MCF 10A (cell line): ENCODE measurements at regions of chr4 and their contacts with region 1.

Region 1: GRCh38 chr4:152640058-152640833 is 39.6 kb downstream of the TMEM154 start:
- DNase-seq: peak; percentile 38
- H3K4me3 Mint-ChIP-seq: no peak overlapping the region
- H3K27ac Mint-ChIP-seq: no peak overlapping the region
- H3K4me1 Mint-ChIP-seq: no peaks in the 10 kb centered on the region
- H3K27me3 Mint-ChIP-seq: no peaks in the 10 kb centered on the region
- CTCF ChIP-seq: peak; percentile 39

Region 2: GRCh38 chr4:152408514-152409327 is 231.5 kb before region 1 on chr4:
- CTCF ChIA-PET with region 1: interaction called, 3 read pairs
- POLR2A ChIA-PET with region 1: no interaction called
- intact Hi-C with region 1: loop called (anchors 1 kb)
- DNase-seq: peak; percentile 60
- H3K4me3 Mint-ChIP-seq: no peak overlapping the region
- H3K27ac Mint-ChIP-seq: no peak overlapping the region
- H3K4me1 Mint-ChIP-seq: peaks cover 6% of the 10 kb centered on the region
- H3K27me3 Mint-ChIP-seq: no peaks in the 10 kb centered on the region
- CTCF ChIP-seq: peak; percentile 55

Region 3: DNA sequence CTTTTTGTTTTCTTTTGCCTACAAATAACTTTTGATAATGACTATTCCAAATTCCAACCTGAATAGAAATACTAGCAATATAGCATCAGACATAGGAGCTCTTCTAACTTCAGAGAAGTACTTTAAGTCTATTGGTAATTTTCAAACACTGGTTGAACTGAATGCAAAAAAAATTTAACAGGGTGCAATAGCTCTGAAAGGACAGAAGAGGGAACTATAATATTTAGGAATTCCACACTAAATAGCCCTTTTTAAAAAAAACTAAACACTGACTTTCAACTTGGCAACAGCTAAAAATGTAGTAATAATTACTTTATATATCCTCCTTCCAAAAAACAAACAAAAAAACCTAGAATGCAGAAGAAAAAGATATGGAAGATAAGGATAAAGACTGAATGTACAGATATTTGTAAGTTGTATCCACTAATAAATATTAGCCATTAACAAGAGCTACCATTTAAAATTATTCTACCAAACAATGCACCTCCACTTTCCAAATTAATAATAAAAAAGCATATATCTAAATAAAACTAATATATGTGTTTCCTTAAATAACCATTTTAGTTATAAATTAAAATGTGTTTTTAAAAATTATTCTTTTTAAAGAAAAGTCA is 185.7 kb before region 1 on chr4:
- CTCF ChIA-PET with region 1: interaction called, 42 read pairs
- POLR2A ChIA-PET with region 1: interaction called, 4 read pairs
- intact Hi-C with region 1: loop called (anchors 1 kb)
- DNase-seq: peak; percentile 24
- H3K4me3 Mint-ChIP-seq: no peak overlapping the region
- H3K27ac Mint-ChIP-seq: no peak overlapping the region
- H3K4me1 Mint-ChIP-seq: peaks cover 35% of the 10 kb centered on the region
- H3K27me3 Mint-ChIP-seq: no peaks in the 10 kb centered on the region
- CTCF ChIP-seq: peak; percentile 60

Region 4: GRCh38 chr4:152525873-152526272 is 114.4 kb before region 1 on chr4:
- CTCF ChIA-PET with region 1: interaction called, 11 read pairs
- POLR2A ChIA-PET with region 1: no interaction called
- intact Hi-C with region 1: no loop called
- DNase-seq: no peak
- H3K4me3 Mint-ChIP-seq: no peak overlapping the region
- H3K27ac Mint-ChIP-seq: no peak overlapping the region
- H3K4me1 Mint-ChIP-seq: peaks cover 26% of the 10 kb centered on the region
- H3K27me3 Mint-ChIP-seq: no peaks in the 10 kb centered on the region
- CTCF ChIP-seq: no peak

Region 5: GRCh38 chr4:152651473-152652060 is 11.3 kb after region 1 on chr4:
- CTCF ChIA-PET with region 1: interaction called, 10 read pairs
- POLR2A ChIA-PET with region 1: no interaction called
- intact Hi-C with region 1: no loop called
- DNase-seq: no peak
- H3K4me3 Mint-ChIP-seq: no peak overlapping the region
- H3K27ac Mint-ChIP-seq: no peak overlapping the region
- H3K4me1 Mint-ChIP-seq: no peaks in the 10 kb centered on the region
- H3K27me3 Mint-ChIP-seq: no peaks in the 10 kb centered on the region
- CTCF ChIP-seq: no peak